H1 (cell line): ENCODE measurements at regions of chr6 and their contacts with region 1.

Region 1: DNA sequence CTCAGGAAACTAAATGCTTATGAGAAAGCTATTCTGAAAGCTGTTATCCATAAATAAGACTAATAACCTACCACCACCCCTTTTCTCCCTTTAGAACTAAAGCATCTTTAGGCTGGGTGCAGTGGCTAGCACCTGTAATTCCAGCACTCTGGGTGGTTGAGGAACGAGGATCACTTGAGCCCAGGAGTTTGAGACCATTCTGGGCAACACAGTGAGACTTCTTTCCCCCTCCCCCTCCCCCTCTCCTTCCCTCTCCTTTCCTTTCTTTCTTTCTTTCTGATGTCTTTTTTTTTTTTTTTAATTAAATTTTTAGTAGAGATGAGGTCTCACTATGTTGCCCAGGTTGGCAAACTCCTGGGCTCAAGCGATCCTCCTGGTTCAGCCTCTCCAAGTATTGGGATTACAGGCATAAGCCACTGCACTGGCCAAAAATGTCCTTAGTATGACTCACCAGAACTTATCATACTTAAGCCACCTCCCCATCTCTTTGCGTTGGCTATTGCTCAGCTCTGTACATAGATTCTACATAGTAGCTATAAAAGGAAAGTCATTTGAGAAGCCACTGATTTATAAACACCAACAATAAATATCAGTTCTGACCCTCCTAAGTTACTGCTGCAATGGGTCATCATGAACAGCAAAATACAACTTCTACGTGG is 54.8 kb upstream of the SPDEF start:
- DNase-seq: no peak
- H3K4me3 ChIP-seq: no peak overlapping the region
- H3K27ac ChIP-seq: no peak overlapping the region
- H3K4me1 ChIP-seq: no peaks in the 10 kb centered on the region
- H3K27me3 ChIP-seq: no peaks in the 10 kb centered on the region
- CTCF ChIP-seq: no peak
- EP300 ChIP-seq: no peak
- POLR2A ChIP-seq: no peak
- RAD21 ChIP-seq: no peak

Region 2: GRCh38 chr6:34476447-34476846 is 134.5 kb before region 1 on chr6:
- CTCF ChIA-PET with region 1: interaction called, 14 read pairs
- POLR2A ChIA-PET with region 1: no interaction called
- DNase-seq: no peak
- H3K4me3 ChIP-seq: no peak overlapping the region
- H3K27ac ChIP-seq: no peak overlapping the region
- H3K4me1 ChIP-seq: peaks cover 0 to 17% (median 5%) of the 10 kb centered on the region in 4 experiments; a peak in 4 of 7 replicates
- H3K27me3 ChIP-seq: no peaks in the 10 kb centered on the region
- CTCF ChIP-seq: no peak
- EP300 ChIP-seq: no peak
- POLR2A ChIP-seq: no peak
- RAD21 ChIP-seq: no peak

Region 3: GRCh38 chr6:34506718-34507117 is 104.2 kb before region 1 on chr6:
- CTCF ChIA-PET with region 1: no interaction called
- POLR2A ChIA-PET with region 1: no interaction called
- DNase-seq: peak in 1 of 2 experiments; percentile 43
- H3K4me3 ChIP-seq: no peak overlapping the region
- H3K27ac ChIP-seq: no peak overlapping the region
- H3K4me1 ChIP-seq: peaks cover 0 to 5% (median under 1%) of the 10 kb centered on the region in 4 experiments; a peak in 4 of 7 replicates
- H3K27me3 ChIP-seq: no peaks in the 10 kb centered on the region
- CTCF ChIP-seq: no peak
- EP300 ChIP-seq: no peak
- POLR2A ChIP-seq: no peak
- RAD21 ChIP-seq: no peak

Region 4: GRCh38 chr6:34526992-34527728 is 83.8 kb before region 1 on chr6:
- CTCF ChIA-PET with region 1: interaction called, 79 read pairs
- POLR2A ChIA-PET with region 1: interaction called, 4 read pairs
- DNase-seq: peak; percentile 80 to 96
- H3K4me3 ChIP-seq: peak overlapping the region in 3 of 4 experiments; percentile 12 to 54 (median 18); a peak in 3 of 8 replicates
- H3K27ac ChIP-seq: no peak overlapping the region
- H3K4me1 ChIP-seq: peaks cover 3 to 20% (median 9%) of the 10 kb centered on the region in 4 experiments
- H3K27me3 ChIP-seq: no peaks in the 10 kb centered on the region
- CTCF ChIP-seq: peak in 2 of 3 experiments; percentile 64 to 74; a peak in 3 of 4 replicates
- EP300 ChIP-seq: no peak
- POLR2A ChIP-seq: peak in 1 of 2 experiments; percentile 54; a peak in 1 of 3 replicates
- RAD21 ChIP-seq: peak; percentile 60 to 62

Region 5: GRCh38 chr6:34574647-34575293 is 36.2 kb before region 1 on chr6:
- CTCF ChIA-PET with region 1: interaction called, 13 read pairs
- POLR2A ChIA-PET with region 1: no interaction called
- DNase-seq: no peak
- H3K4me3 ChIP-seq: no peak overlapping the region
- H3K27ac ChIP-seq: peak overlapping the region; percentile 41; the same call in 1 of the 2 replicates
- H3K4me1 ChIP-seq: peaks cover 0 to 10% (median 6%) of the 10 kb centered on the region in 4 experiments
- H3K27me3 ChIP-seq: no peaks in the 10 kb centered on the region
- CTCF ChIP-seq: no peak
- EP300 ChIP-seq: no peak
- POLR2A ChIP-seq: no peak
- RAD21 ChIP-seq: no peak

Region 6: DNA sequence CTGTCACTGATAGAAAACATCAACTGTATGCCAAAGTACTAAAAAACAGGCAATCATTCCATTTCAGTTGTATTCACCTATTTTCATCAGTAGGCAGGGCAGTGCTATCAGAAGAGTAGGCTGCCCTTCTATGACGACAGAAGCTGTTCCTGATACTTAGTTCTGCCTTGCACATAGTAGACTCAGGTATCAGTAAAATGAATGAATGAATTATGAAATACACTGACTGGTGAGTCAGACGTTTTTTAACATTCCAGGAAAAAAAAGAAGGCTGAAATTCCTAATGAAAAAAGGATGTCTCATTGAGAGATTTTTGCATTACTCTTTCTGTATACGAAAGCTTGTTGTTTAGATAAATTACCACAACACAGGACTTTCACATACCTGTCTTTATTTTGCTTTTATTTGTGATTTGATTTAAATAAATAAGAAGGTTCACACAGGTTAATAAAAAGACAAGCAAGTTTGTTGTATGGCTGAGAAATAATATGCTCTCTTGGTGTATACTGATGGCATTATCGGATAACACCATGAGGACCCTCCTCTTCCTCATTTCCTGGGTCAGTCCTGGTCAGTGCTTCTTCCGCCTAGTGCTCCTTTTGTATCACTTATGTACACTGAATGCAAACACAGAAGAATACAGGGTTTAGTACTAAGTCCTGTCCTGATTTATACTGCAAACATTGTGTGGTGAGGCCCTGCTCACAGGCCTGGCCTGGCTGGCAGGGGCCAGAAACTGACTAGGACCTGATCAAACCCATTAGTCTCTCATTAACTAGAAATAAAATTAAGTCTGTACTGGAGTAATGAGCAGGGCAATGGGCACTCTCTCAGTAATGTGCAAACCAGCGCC is 15.4 kb before region 1 on chr6:
- CTCF ChIA-PET with region 1: interaction called, 26 read pairs
- POLR2A ChIA-PET with region 1: interaction called, 3 read pairs
- DNase-seq: no peak
- H3K4me3 ChIP-seq: no peak overlapping the region
- H3K27ac ChIP-seq: no peak overlapping the region; the same call in 1 of the 2 replicates
- H3K4me1 ChIP-seq: peaks cover 0 to 5% (median 0%) of the 10 kb centered on the region in 4 experiments; a peak in 2 of 7 replicates
- H3K27me3 ChIP-seq: no peaks in the 10 kb centered on the region
- CTCF ChIP-seq: no peak
- EP300 ChIP-seq: no peak
- POLR2A ChIP-seq: no peak
- RAD21 ChIP-seq: no peak